HEK293 (cell line): ENCODE measurements at regions of chr17 and their contacts with region 1.

Region 1: DNA sequence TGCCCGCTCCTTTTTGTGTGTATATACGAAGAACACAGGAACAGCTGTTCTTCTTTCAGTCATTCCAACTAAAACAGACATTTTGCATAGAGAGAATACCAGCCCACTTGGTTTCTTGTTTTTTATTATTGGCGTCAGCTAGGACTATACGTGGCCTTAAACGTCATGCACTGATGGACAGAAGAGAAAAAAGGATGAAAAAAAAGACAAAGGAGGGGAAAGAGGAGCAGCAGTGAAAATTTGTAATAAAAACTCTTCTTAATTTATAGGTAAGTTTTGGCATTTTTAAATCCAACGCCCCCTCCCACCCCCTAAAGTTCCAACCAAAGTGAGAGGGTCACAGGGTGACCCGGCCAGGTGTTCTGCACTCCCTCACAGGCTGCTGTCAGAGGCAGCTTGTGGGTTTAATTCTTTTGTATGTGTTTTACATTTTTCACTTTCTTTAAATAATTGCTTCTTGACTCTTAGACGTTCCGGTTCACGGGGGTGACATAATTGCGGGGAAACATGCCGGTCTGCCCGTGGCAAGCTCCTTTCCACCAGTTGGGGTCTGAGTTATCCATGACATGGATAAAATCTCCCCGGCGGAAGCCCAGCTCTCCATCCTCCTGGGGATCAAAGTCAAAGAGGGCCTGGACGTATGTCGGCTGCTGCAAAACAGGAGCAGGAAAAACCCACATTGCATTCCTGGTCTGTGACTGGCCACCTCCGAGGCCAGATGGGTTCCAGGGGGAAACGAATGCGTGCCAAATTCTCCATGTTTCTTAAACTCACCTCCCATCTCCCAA is 30.9 kb upstream of the SLC25A19 start:
- H3K4me3 ChIP-seq: no peak overlapping the region
- H3K27ac ChIP-seq: no peak overlapping the region
- H3K4me1 ChIP-seq: peaks cover 5% of the 10 kb centered on the region
- CTCF ChIP-seq: no peak

Region 2: GRCh38 chr17:75289115-75289831 is 30.8 kb before region 1 on chr17 and contains the start of gene SLC25A19:
- CTCF ChIA-PET with region 1: interaction called, 5 read pairs
- POLR2A ChIA-PET with region 1: interaction called, 16 read pairs
- H3K4me3 ChIP-seq: peak within 1 kb of the TSS; percentile 79
- H3K27ac ChIP-seq: peak within 1 kb of the TSS; percentile 79
- H3K4me1 ChIP-seq: peaks cover 4% of the 10 kb centered on the region; the same call in 1 of the 2 replicates
- CTCF ChIP-seq: peak; percentile 90

Region 3: DNA sequence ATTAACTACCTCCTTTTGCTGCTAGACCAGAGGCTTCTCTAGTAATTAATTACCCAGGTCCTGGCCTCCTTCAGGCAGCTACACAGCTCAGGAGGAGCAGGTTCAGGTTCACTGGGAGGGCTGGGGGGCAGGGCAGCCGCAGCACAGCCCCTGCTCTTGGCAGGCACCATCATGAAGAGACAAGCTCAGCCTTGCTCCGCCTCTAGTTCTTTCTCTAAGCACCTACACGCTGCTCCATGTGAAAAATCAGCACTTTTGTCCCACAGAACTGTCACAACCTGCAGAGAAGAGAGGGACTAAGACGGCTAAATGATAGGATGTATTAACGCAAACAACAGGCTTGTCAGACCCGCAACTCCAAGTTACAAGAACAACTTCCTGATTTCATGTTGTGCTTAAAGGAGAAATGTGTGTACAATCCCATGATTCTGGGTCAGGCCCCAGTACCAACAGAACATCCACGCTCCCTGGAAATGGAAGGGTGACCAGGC is 32.0 kb after region 1 on chr17:
- CTCF ChIA-PET with region 1: interaction called, 11 read pairs
- POLR2A ChIA-PET with region 1: no interaction called
- H3K4me3 ChIP-seq: no peak overlapping the region
- H3K27ac ChIP-seq: peak overlapping the region; percentile 50
- H3K4me1 ChIP-seq: peaks cover 17% of the 10 kb centered on the region
- CTCF ChIP-seq: no peak

Region 4: GRCh38 chr17:75386430-75386829 is 66.3 kb after region 1 on chr17:
- CTCF ChIA-PET with region 1: interaction called, 6 read pairs
- POLR2A ChIA-PET with region 1: interaction called, 12 read pairs
- H3K4me3 ChIP-seq: no peak overlapping the region
- H3K27ac ChIP-seq: no peak overlapping the region
- H3K4me1 ChIP-seq: peaks cover 21% of the 10 kb centered on the region
- CTCF ChIP-seq: no peak

Region 5: GRCh38 chr17:75400326-75400939 is 80.3 kb after region 1 on chr17:
- CTCF ChIA-PET with region 1: interaction called, 41 read pairs
- POLR2A ChIA-PET with region 1: interaction called, 9 read pairs
- H3K4me3 ChIP-seq: no peak overlapping the region
- H3K27ac ChIP-seq: no peak overlapping the region
- H3K4me1 ChIP-seq: peaks cover 12% of the 10 kb centered on the region
- CTCF ChIP-seq: no peak

Region 6: GRCh38 chr17:75412455-75413317 is 92.6 kb after region 1 on chr17:
- CTCF ChIA-PET with region 1: interaction called, 30 read pairs
- POLR2A ChIA-PET with region 1: interaction called, 5 read pairs
- H3K4me3 ChIP-seq: no peak overlapping the region
- H3K27ac ChIP-seq: no peak overlapping the region
- H3K4me1 ChIP-seq: no peaks in the 10 kb centered on the region
- CTCF ChIP-seq: peak; percentile 81